ENCODE measurements at regions of chr15 and their contacts with region 1.

Region 1: GRCh38 chr15:74373731-74374647 is 6.5 kb upstream of the CYP11A1 start:
- DNase-seq: peak; percentile 88 to 97 (median 93)
- H3K4me3 ChIP-seq: peak overlapping the region; percentile 85
- H3K4me3 Mint-ChIP-seq: peak overlapping the region; percentile 66 to 95 (median 82)
- H3K27ac ChIP-seq: peak overlapping the region; percentile 54
- H3K27ac Mint-ChIP-seq: peak overlapping the region; percentile 53 to 87 (median 75)
- H3K4me1 ChIP-seq: peaks cover 10% of the 10 kb centered on the region
- H3K4me1 Mint-ChIP-seq: peaks cover 11 to 15% (median 13%) of the 10 kb centered on the region in 3 donors
- H3K27me3 ChIP-seq: no peaks in the 10 kb centered on the region
- H3K27me3 Mint-ChIP-seq: peaks cover 5 to 15% of the 10 kb centered on the region in 2 donors

Region 2: DNA sequence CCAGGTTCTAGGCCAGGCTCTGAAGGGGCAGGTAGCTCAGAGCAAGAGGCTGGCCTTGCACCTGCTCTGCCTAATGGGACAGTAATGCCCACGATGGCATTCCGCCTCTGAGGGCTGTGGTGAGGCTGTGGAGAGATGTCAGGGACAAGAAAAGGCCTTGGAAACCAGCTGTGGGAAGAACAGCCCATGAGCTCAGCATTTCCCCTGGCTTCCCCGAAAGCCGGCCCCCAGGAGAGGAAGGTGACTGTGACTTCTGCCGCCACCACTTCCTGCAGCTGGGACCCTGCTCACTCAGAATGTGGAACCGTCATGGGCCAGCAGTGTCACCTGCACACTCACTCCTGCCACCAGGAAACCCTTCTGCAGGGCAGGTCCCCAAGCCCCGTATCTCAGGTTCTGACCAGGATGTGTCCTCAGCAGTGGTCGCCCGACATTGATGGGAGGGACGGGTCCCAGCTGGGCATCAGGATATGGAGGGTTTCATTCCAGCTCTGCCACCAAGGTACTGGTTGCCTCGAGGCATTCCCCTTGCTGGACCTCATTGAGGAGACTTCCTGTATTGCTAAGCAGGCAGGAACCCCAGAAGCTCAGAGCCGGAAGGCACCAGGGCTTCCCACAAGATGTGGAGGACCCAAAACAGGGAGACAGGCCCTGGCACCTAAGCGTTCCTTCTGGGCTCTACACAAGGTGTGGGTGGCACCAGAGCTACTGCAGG is 29.0 kb after region 1 on chr15:
- CTCF ChIA-PET with region 1: interaction called, 11 read pairs
- POLR2A ChIA-PET with region 1: no interaction called
- DNase-seq: peak; percentile 30 to 73 (median 46)
- H3K4me3 ChIP-seq: peak overlapping the region; percentile 11
- H3K4me3 Mint-ChIP-seq: peak overlapping the region in 6 of 7 donors; percentile 12 to 78 (median 64)
- H3K27ac ChIP-seq: peak overlapping the region; percentile 39
- H3K27ac Mint-ChIP-seq: peak overlapping the region; percentile 61 to 96 (median 81)
- H3K4me1 ChIP-seq: peaks cover 51% of the 10 kb centered on the region
- H3K4me1 Mint-ChIP-seq: peaks cover 69 to 76% (median 71%) of the 10 kb centered on the region in 3 donors
- H3K27me3 ChIP-seq: no peaks in the 10 kb centered on the region
- H3K27me3 Mint-ChIP-seq: peaks cover 0 to 1% of the 10 kb centered on the region in 2 donors

Region 3: GRCh38 chr15:74460871-74461846 is 87.2 kb after region 1 on chr15 and contains the start of gene UBL7:
- CTCF ChIA-PET with region 1: interaction called, 5 read pairs
- POLR2A ChIA-PET with region 1: interaction called, 13 read pairs
- DNase-seq: peak; percentile 88 to 96 (median 94)
- H3K4me3 ChIP-seq: peak within 1 kb of the TSS; percentile 87
- H3K4me3 Mint-ChIP-seq: peak within 1 kb of the TSS; percentile 91 to 96 (median 94)
- H3K27ac ChIP-seq: peak within 1 kb of the TSS; percentile 81
- H3K27ac Mint-ChIP-seq: peak within 1 kb of the TSS; percentile 76 to 98 (median 88)
- H3K4me1 ChIP-seq: peaks cover 17% of the 10 kb centered on the region
- H3K4me1 Mint-ChIP-seq: peaks cover 42 to 69% (median 62%) of the 10 kb centered on the region in 3 donors
- H3K27me3 ChIP-seq: no peaks in the 10 kb centered on the region
- H3K27me3 Mint-ChIP-seq: no peaks in the 10 kb centered on the region
- total RNA-seq, gene UBL7: 64.9 to 67.7 TPM